ENCODE measurements at regions of chr5 and their contacts with region 1.

Region 1: GRCh38 chr5:142713121-142713706 is 27.3 kb upstream of the FGF1 start:
- DNase-seq: no peak
- H3K4me3 ChIP-seq: peak overlapping the region; percentile 75
- CTCF ChIP-seq: peak; percentile 98

Region 2: GRCh38 chr5:142636076-142636475 is 77.1 kb before region 1 on chr5:
- CTCF ChIA-PET with region 1: interaction called, 17 read pairs
- POLR2A ChIA-PET with region 1: no interaction called
- DNase-seq: no peak
- H3K4me3 ChIP-seq: no peak overlapping the region
- CTCF ChIP-seq: no peak

Region 3: GRCh38 chr5:142674531-142675469 is 38.4 kb before region 1 on chr5:
- CTCF ChIA-PET with region 1: interaction called, 29 read pairs
- POLR2A ChIA-PET with region 1: no interaction called
- DNase-seq: peak; percentile 26
- H3K4me3 ChIP-seq: no peak overlapping the region
- CTCF ChIP-seq: no peak

Region 4: DNA sequence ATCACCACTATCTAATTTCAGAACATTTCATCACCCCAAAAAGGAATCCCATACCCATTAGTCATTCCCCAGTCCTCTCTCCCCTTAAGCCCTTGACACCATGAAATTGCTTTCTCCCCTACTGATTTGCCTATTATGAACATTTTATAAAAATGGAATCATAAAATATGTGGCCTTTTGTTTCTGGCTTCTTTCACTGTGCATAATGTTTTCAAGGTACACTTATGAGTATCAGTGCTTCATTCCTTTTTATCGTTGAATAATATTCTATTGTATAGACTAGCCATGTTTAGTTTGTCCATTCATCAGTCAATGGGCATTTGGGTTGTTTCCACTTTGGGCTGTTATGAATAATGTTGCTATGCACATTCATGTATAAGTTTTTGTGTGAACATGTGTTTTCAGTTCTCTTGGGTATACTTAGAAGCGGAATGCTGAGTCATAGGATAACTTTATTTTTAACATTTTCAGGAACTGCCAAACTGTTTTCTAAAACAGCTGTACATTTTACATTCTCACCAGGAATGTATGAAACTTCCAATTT is 13.0 kb after region 1 on chr5:
- CTCF ChIA-PET with region 1: interaction called, 82 read pairs
- POLR2A ChIA-PET with region 1: no interaction called
- DNase-seq: peak; percentile 73
- H3K4me3 ChIP-seq: no peak overlapping the region
- CTCF ChIP-seq: no peak

Region 5: DNA sequence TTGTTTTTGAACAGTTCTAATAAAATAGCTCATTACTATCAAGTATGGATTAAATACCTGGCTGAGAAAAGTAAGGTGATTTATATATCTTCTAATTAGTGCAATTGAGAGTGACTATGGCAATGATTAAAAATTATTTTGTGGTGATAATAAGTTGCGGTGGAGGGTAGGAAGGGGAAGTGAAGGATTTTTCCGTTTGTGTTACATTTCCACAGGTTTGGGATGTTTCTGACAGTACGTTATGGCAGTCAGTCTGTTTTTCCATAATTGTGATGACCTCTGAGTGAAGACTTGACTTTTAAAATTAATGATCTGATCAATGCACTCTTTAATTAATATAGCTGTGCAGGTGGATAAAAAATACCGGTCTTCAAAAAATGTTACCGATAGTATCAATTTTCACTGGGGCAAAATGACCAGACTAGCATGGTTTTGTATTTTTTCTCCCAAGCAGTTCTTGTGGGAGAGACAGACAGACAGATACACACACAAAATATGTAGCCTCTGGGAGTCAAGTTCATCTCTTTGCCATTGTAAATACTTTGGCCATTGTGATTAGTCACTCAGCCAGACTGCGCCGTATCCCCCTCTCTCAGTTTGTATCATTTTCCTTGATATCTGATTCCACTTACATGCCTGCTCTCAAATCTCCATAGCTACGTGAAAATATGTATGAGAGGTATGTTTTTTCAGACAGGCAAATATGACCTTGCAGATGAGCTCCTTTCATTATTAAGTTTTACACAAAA is 117.2 kb after region 1 on chr5:
- CTCF ChIA-PET with region 1: interaction called, 10 read pairs
- POLR2A ChIA-PET with region 1: no interaction called
- DNase-seq: peak; percentile 45
- H3K4me3 ChIP-seq: no peak overlapping the region
- CTCF ChIP-seq: no peak

Region 6: GRCh38 chr5:142894749-142895148 is 181.5 kb after region 1 on chr5:
- CTCF ChIA-PET with region 1: interaction called, 2,759 read pairs
- POLR2A ChIA-PET with region 1: no interaction called
- DNase-seq: peak; percentile 36
- H3K4me3 ChIP-seq: no peak overlapping the region
- CTCF ChIP-seq: no peak